ENCODE measurements at regions of chr1 and their contacts with region 1.

Region 1: DNA sequence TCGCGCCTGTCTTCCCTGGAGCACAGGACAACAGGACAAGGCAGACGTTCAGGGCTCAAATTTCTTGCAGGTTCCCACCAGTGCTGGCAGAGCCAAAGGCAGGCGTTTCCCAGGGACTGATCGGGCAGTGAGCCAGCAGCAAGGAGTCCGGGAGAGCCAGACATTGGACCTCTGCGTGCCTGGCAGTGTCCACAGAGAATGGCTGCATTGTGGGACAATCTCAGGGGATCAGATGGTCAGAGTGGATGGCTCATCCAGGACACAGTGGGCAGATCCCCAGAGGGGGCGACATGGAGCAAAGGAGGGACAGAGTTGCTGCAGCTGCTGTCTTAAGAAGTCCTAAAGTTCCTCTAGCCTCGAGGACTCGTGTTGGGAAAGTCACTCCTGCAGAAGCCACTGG is 4.6 kb downstream of the TMEM63A start:
- DNase-seq: peak; percentile 84

Region 2: GRCh38 chr1:224454397-224455066 is 1423.0 kb before region 1 on chr1:
- intact Hi-C with region 1: loop called in 1 of 2 experiments (anchors 5 kb)
- DNase-seq: no peak

Region 3: GRCh38 chr1:225999227-225999911 is 121.8 kb after region 1 on chr1 and contains the start of gene SDE2:
- intact Hi-C with region 1: no loop called
- DNase-seq: peak; percentile 100
- total RNA-seq, gene SDE2: 17.9 to 18.0 TPM